ENCODE measurements at regions of chr5 and their contacts with region 1.

Region 1: DNA sequence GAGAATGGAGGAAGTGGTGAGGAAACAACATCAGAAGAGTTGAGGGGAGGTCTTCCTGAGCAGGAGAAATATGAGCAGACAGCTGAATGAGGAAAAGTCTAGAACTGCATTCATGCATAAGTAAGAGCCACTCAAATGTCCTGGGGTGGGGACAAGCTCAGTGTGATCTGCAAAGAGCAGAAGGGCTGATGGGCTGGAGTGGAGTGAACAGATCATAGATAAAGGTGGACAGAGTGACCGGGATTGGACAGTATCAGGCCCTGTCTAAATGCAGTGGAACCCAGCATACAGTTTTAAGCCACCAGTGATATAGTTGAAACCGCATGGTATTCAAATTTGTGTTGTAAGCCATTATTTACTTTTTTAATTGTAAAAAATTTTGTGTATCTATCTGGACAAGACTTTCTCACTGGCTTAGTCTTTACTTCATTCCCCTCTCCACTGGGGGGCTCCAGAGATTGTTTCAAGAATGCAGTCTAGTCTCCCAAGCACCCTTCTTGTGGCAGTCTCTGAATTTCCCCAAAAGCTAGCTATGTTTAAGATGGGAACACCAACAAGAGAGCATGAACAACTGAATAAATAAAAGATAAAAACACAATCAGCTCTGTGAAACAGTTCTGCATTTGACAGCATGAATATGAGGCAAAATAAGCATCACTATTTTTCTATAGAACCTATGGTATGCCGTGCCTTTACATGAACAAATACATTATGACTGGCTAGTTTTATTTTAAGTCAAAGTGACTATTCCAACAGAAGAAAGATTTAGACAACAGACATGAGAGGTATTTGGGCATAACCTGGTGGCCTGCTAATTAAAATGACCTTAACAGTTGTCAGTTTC is 10.7 kb upstream of the STK32A start:
- DNase-seq: no peak

Region 2: GRCh38 chr5:147267082-147267832 is 43.1 kb after region 1 on chr5:
- intact Hi-C with region 1: no loop called
- DNase-seq: no peak

Region 3: GRCh38 chr5:147382776-147383175 is 158.6 kb after region 1 on chr5:
- intact Hi-C with region 1: loop called (anchors 10 kb)
- DNase-seq: no peak

Region 4: GRCh38 chr5:147558826-147559225 is 334.7 kb after region 1 on chr5:
- intact Hi-C with region 1: loop called (anchors 5 kb)
- DNase-seq: no peak

Region 5: DNA sequence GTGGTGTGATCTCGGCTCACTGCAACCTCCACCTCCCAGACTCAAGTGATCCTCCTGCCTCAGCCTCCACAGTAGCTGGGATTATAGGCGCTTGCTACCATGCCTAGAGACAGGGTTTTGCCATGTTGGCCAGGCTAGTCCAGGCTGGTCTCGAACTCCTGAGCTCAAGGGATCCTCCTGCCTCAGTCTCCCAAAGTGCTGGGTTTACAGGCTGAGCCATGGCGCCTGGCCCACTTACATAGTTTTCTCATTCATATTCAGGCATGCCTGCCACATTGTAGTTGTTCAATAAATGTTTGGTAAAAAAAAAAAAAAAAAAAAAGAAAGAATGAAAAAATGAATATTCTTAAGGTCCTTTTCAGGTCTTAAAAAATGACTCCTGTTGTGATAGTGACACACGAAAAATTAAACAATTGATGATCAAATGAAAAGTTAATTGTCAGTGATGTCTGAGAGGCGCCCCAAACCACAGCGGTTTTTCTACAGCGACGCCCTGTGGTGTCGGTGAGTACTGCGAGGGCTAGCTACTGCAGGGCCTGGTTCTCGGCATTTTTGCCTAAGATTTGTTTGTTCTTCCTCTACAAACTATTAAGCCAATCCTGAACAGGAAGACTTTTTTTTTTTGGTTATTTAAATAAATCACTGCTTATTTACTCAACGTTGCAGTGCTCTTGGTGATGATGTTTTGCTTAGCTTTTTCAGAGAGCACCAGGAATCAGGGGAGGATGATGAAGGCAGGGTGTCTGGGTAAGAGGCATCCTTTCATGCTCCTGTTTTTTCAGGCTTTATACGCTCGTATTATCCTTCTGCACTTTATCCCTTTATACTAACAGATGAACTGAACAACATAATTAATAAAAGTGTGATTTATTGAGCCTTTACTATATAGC is 352.7 kb after region 1 on chr5:
- intact Hi-C with region 1: loop called (anchors 5 kb)
- DNase-seq: no peak